ENCODE measurements at regions of chr5 and their contacts with region 1.

Region 1: GRCh38 chr5:6745706-6746222 is 32.5 kb downstream of the TENT4A start:
- DNase-seq: no peak
- ATAC-seq: peak; percentile 77
- H3K4me3 ChIP-seq: no peak overlapping the region
- H3K27ac ChIP-seq: no peak overlapping the region
- H3K4me1 ChIP-seq: no peaks in the 10 kb centered on the region
- H3K27me3 ChIP-seq: no peaks in the 10 kb centered on the region
- CTCF ChIP-seq: peak; percentile 68 to 88 (median 81)
- EP300 ChIP-seq: no peak
- POLR2A ChIP-seq: no peak
- RAD21 ChIP-seq: peak; percentile 90

Region 2: GRCh38 chr5:5492087-5492933 is 1253.5 kb before region 1 on chr5:
- CTCF ChIA-PET with region 1: no interaction called
- POLR2A ChIA-PET with region 1: no interaction called
- RAD21 ChIA-PET with region 1: interaction called, 3 read pairs
- SMC1A ChIA-PET with region 1: no interaction called
- in situ Hi-C with region 1: loop called (anchors 10 kb)
- intact Hi-C with region 1: loop called (anchors 10 kb)
- DNase-seq: peak; percentile 25
- ATAC-seq: peak; percentile 65
- H3K4me3 ChIP-seq: no peak overlapping the region
- H3K27ac ChIP-seq: no peak overlapping the region
- H3K4me1 ChIP-seq: no peaks in the 10 kb centered on the region
- H3K27me3 ChIP-seq: no peaks in the 10 kb centered on the region
- CTCF ChIP-seq: peak; percentile 67 to 78 (median 78)
- EP300 ChIP-seq: no peak
- POLR2A ChIP-seq: no peak
- RAD21 ChIP-seq: peak; percentile 91

Region 3: GRCh38 chr5:6615034-6615815 is 130.5 kb before region 1 on chr5:
- CTCF ChIA-PET with region 1: interaction called, 10 read pairs
- POLR2A ChIA-PET with region 1: no interaction called
- RAD21 ChIA-PET with region 1: no interaction called
- SMC1A ChIA-PET with region 1: interaction called, 5 read pairs
- in situ Hi-C with region 1: no loop called
- intact Hi-C with region 1: no loop called
- DNase-seq: no peak
- ATAC-seq: no peak; the same call in 2 of the 3 replicates
- H3K4me3 ChIP-seq: no peak overlapping the region
- H3K27ac ChIP-seq: no peak overlapping the region
- H3K4me1 ChIP-seq: no peaks in the 10 kb centered on the region
- H3K27me3 ChIP-seq: no peaks in the 10 kb centered on the region
- CTCF ChIP-seq: no peak
- EP300 ChIP-seq: no peak
- POLR2A ChIP-seq: no peak
- RAD21 ChIP-seq: no peak

Region 4: DNA sequence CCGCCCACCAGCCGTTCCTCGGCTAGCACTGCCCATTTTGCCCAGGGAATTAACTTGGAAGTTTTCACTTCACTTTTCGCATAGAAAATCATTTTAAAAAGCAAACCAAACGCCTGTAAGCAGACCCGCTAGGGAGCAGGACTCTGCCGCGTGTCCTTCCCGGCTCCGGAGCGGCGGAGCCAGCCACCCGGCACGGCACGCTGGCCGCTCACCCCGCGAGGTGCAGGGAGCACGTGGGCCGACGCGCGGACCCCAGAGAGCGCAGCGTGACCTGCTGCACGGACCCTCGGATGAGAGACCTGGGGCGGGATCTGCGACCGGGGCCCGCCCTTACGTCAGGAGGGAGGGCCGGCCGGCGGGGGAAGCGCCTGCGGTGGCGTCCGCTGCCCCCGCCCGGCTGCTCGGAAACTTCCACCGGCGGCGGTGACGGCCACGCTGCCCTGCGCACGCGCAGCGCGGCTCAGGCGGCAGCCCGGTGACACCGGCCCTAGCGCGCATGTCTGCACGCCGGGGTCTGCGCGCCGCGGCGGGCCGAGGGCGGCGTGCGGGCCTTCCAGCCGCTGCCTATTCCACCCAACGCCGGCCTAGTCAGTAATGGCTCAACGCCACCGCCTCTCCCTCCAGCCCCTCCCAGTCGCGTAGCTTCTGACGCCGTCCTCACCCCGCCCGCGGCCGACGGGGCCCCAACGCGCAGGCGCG is 33.0 kb before region 1 on chr5:
- CTCF ChIA-PET with region 1: interaction called, 16 read pairs
- POLR2A ChIA-PET with region 1: interaction called, 7 read pairs
- RAD21 ChIA-PET with region 1: interaction called, 4 read pairs
- SMC1A ChIA-PET with region 1: interaction called, 5 read pairs
- in situ Hi-C with region 1: no loop called
- intact Hi-C with region 1: loop called (anchors 2 kb)
- DNase-seq: peak; percentile 72
- ATAC-seq: peak; percentile 72
- H3K4me3 ChIP-seq: peak overlapping the region; percentile 85
- H3K27ac ChIP-seq: peak overlapping the region; percentile 93
- H3K4me1 ChIP-seq: peaks cover 26% of the 10 kb centered on the region
- H3K27me3 ChIP-seq: no peaks in the 10 kb centered on the region
- CTCF ChIP-seq: peak in 1 of 3 experiments; percentile 30; a peak in 2 of 6 replicates
- EP300 ChIP-seq: 0 out of 4 replicates have a peak, but pooled peaks of 1 of the 2 experiments have one; percentile 5
- POLR2A ChIP-seq: peak; percentile 75
- RAD21 ChIP-seq: no peak

Region 5: DNA sequence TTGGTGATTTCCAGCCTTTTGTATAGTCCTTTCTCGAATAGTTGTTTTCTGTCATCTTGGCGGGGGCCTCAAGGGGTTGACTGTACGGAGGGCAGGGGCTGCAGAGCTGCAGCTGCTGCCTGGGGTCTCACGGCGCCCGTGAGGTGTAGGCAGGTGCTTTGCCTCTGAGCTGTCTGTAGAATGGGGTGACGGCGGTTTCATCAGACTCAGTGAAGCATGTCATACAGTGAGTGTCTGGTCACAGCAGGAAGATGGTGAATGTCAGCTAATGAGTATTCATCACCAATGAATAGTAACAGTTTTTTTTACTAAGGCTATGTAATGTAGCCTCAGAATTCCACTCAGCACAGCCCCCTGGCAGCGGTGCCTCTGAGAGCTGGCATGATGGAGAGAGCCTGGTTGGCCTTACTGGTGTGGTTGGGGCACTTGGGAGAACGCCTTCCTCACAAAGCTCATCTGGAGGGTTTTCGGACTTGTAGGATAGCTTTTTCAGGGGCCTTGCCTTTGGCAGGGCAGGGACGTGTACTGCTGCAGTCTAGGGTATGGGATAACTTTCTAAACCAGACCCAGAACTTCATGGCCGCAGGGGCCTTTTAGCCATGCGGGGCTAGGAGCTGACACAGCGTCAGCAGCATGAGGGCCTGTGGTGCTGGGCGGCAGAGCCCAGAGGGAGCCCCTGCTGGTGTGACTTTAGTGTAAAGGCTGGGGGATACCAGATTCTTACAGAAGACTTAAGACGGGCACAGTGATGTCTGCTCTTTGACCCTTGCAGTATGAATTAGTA is 17.6 kb before region 1 on chr5:
- CTCF ChIA-PET with region 1: interaction called, 23 read pairs
- POLR2A ChIA-PET with region 1: interaction called, 4 read pairs
- RAD21 ChIA-PET with region 1: interaction called, 5 read pairs
- SMC1A ChIA-PET with region 1: interaction called, 15 read pairs
- in situ Hi-C with region 1: no loop called
- intact Hi-C with region 1: no loop called
- DNase-seq: no peak
- ATAC-seq: peak; percentile 89
- H3K4me3 ChIP-seq: peak overlapping the region; percentile 31
- H3K27ac ChIP-seq: peak overlapping the region; percentile 84
- H3K4me1 ChIP-seq: peaks cover 64% of the 10 kb centered on the region
- H3K27me3 ChIP-seq: no peaks in the 10 kb centered on the region
- CTCF ChIP-seq: no peak
- EP300 ChIP-seq: peak; percentile 64 to 91
- POLR2A ChIP-seq: 0 out of 2 replicates have a peak, but pooled peaks have one; percentile 15
- RAD21 ChIP-seq: no peak

Region 6: DNA sequence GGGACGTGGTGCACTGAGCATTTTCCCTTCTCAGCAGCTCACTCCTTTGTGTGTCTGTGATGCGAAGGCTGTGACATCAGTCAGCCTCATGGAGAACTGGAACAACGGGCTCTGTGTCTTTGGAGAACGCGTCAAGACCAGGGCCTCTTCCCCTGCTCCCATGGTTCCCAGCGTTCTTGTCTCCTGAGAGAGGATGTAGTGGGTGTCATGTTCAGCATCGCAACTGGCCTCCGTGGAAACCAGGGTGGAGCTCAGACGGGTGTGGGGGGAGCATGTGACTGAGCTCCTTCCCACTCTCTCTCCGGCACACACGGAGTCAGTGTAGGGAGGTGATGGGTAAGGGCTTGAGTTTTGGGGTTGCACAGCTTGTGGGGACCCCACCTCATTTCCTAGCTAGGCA is 27.1 kb after region 1 on chr5:
- CTCF ChIA-PET with region 1: no interaction called
- POLR2A ChIA-PET with region 1: no interaction called
- RAD21 ChIA-PET with region 1: no interaction called
- SMC1A ChIA-PET with region 1: no interaction called
- in situ Hi-C with region 1: no loop called
- intact Hi-C with region 1: no loop called
- DNase-seq: no peak
- ATAC-seq: no peak
- H3K4me3 ChIP-seq: no peak overlapping the region
- H3K27ac ChIP-seq: no peak overlapping the region
- H3K4me1 ChIP-seq: no peaks in the 10 kb centered on the region
- H3K27me3 ChIP-seq: no peaks in the 10 kb centered on the region
- CTCF ChIP-seq: no peak
- EP300 ChIP-seq: no peak
- POLR2A ChIP-seq: no peak
- RAD21 ChIP-seq: no peak

Measured in GM12878 (cell line).